Activated CD4-positive, alpha-beta T cell treated with anti-CD3 and anti-CD28 coated beads for 36 hours (primary cell): ENCODE measurements at regions of chr19 and their contacts with region 1.

Region 1: DNA sequence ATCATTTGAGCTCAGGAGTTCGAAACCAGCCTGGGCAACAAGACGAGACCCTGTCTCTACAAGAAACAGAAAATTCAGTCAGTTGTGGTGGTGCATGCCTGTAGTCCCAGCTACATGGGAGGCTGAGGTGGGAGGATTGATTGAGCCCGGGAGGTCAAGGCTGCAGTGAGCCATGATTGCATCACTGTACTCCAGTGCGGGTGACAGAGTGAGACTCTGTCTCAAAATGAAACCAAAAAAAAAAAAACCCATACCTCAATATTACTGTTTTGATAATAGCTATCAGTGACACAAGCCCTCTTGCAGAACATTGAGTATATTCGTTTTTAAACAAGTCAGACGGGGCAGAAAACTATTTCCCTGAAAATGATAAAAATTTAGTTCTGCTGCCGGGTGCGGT is 16.2 kb downstream of the ZNF791 start:
- DNase-seq: no peak
- ATAC-seq: peak; percentile 47
- H3K4me3 Mint-ChIP-seq: no peak overlapping the region
- H3K27ac Mint-ChIP-seq: no peak overlapping the region
- H3K4me1 Mint-ChIP-seq: peaks cover 11% of the 10 kb centered on the region
- H3K27me3 Mint-ChIP-seq: no peaks in the 10 kb centered on the region

Region 2: GRCh38 chr19:12350890-12351197 is 276.1 kb before region 1 on chr19:
- CTCF ChIA-PET with region 1: no interaction called
- POLR2A ChIA-PET with region 1: no interaction called
- intact Hi-C with region 1: no loop called
- DNase-seq: no peak
- ATAC-seq: no peak
- H3K4me3 Mint-ChIP-seq: no peak overlapping the region
- H3K27ac Mint-ChIP-seq: no peak overlapping the region
- H3K4me1 Mint-ChIP-seq: no peaks in the 10 kb centered on the region
- H3K27me3 Mint-ChIP-seq: no peaks in the 10 kb centered on the region

Region 3: GRCh38 chr19:12603714-12604113 is 23.2 kb before region 1 on chr19:
- CTCF ChIA-PET with region 1: interaction called, 5 read pairs
- POLR2A ChIA-PET with region 1: interaction called, 11 read pairs
- intact Hi-C with region 1: no loop called
- DNase-seq: peak; percentile 80
- ATAC-seq: peak; percentile 98
- H3K4me3 Mint-ChIP-seq: no peak overlapping the region
- H3K27ac Mint-ChIP-seq: peak overlapping the region; percentile 19
- H3K4me1 Mint-ChIP-seq: peaks cover 17% of the 10 kb centered on the region
- H3K27me3 Mint-ChIP-seq: no peaks in the 10 kb centered on the region